ENCODE measurements at regions of chr15 and their contacts with region 1.

Region 1: GRCh38 chr15:92997821-92998220 is 91.2 kb downstream of the RGMA start:
- DNase-seq: no peak
- ATAC-seq: no peak; the same call in 2 of the 3 replicates
- H3K4me3 ChIP-seq: no peak overlapping the region
- H3K27ac ChIP-seq: no peak overlapping the region
- H3K4me1 ChIP-seq: no peaks in the 10 kb centered on the region
- H3K27me3 ChIP-seq: no peaks in the 10 kb centered on the region
- CTCF ChIP-seq: no peak
- EP300 ChIP-seq: no peak
- POLR2A ChIP-seq: no peak
- RAD21 ChIP-seq: no peak

Region 2: GRCh38 chr15:92960996-92961681 is 36.7 kb before region 1 on chr15:
- CTCF ChIA-PET with region 1: no interaction called
- POLR2A ChIA-PET with region 1: no interaction called
- in situ Hi-C with region 1: no loop called
- intact Hi-C with region 1: loop called (anchors 5 kb)
- DNase-seq: no peak
- ATAC-seq: peak; percentile 61
- H3K4me3 ChIP-seq: no peak overlapping the region; a peak in 1 of 6 replicates
- H3K27ac ChIP-seq: peak overlapping the region; percentile 71
- H3K4me1 ChIP-seq: peaks cover 21% of the 10 kb centered on the region
- H3K27me3 ChIP-seq: no peaks in the 10 kb centered on the region
- CTCF ChIP-seq: no peak
- EP300 ChIP-seq: no peak
- POLR2A ChIP-seq: no peak
- RAD21 ChIP-seq: no peak

Region 3: GRCh38 chr15:93129702-93130488 is 132.1 kb after region 1 on chr15:
- CTCF ChIA-PET with region 1: no interaction called
- POLR2A ChIA-PET with region 1: no interaction called
- in situ Hi-C with region 1: no loop called
- intact Hi-C with region 1: no loop called
- DNase-seq: no peak
- ATAC-seq: no peak
- H3K4me3 ChIP-seq: no peak overlapping the region
- H3K27ac ChIP-seq: no peak overlapping the region
- H3K4me1 ChIP-seq: no peaks in the 10 kb centered on the region
- H3K27me3 ChIP-seq: peaks cover 0 to 31% of the 10 kb centered on the region in 2 experiments; a peak in 2 of 5 replicates
- CTCF ChIP-seq: no peak
- EP300 ChIP-seq: no peak
- POLR2A ChIP-seq: no peak
- RAD21 ChIP-seq: no peak